ENCODE measurements at regions of chr2 and their contacts with region 1.

Region 1: GRCh38 chr2:64914735-64915509 is 74.3 kb upstream of the SLC1A4 start:
- ATAC-seq: peak in 3 of 8 experiments; percentile 23 to 32 (median 24)
- H3K4me3 ChIP-seq: no peak overlapping the region
- H3K27ac ChIP-seq: no peak overlapping the region
- H3K4me1 ChIP-seq: no peaks in the 10 kb centered on the region

Region 2: DNA sequence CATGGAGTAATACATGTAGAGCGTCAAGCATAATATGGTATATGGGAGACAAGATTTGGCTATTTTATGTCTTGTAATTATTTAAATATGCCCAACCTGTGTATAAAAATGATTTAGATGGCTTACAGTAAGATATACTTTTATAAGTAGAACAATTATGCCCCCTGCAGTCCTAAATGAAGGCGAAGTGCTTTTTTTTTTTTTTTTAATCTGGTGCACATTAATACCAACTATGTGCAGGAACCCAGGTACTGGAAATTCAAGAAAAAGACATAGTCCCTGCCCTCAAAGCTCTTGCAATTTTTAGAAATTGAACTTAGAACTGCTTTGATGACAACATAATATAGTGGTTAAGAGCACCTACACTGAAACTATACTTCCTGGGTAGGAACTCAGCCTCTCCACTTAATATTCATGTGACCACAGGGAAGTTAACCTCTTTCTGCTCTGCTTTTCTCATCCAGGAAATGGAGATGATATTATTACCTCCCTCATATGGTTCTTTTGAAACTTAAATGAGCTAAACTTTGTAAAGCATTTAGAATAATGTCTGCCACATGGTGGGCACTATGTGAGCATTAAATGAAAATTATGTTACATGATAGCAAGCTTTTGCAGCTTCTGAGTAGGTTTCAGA is 352.7 kb before region 1 on chr2:
- in situ Hi-C with region 1: no loop called
- ATAC-seq: peak in 2 of 8 experiments; percentile 39 to 59
- H3K4me3 ChIP-seq: no peak overlapping the region
- H3K27ac ChIP-seq: no peak overlapping the region
- H3K4me1 ChIP-seq: no peaks in the 10 kb centered on the region

Region 3: DNA sequence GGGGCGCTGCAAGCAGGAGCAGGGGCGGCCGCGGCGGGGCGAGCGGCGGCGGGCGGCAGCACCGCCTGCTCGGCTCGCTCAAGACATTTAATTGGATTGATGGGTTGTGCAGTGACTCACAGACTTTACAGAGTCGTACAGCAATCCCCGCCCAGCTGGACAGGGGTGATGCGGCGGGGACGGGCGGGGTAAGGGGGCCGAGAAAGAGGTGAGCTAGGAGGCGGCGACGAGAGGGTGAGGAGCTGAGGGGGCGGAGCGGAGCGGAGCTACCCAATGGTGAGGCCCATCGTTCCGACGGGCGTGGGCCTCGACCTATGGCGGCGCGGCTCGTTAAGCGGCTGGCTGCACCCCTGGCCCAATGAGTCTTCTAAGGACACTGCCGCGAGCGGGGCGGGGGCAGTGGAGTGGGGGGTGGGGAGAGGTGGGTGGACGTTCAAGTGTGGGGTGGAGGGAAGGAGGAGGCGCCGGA is 164.1 kb before region 1 on chr2:
- in situ Hi-C with region 1: no loop called
- ATAC-seq: peak; percentile 79 to 88 (median 86)
- H3K4me3 ChIP-seq: peak overlapping the region; percentile 52 to 95 (median 55)
- H3K27ac ChIP-seq: peak overlapping the region; percentile 86 to 87
- H3K4me1 ChIP-seq: peaks cover 3 to 8% of the 10 kb centered on the region in 2 donors

Region 4: DNA sequence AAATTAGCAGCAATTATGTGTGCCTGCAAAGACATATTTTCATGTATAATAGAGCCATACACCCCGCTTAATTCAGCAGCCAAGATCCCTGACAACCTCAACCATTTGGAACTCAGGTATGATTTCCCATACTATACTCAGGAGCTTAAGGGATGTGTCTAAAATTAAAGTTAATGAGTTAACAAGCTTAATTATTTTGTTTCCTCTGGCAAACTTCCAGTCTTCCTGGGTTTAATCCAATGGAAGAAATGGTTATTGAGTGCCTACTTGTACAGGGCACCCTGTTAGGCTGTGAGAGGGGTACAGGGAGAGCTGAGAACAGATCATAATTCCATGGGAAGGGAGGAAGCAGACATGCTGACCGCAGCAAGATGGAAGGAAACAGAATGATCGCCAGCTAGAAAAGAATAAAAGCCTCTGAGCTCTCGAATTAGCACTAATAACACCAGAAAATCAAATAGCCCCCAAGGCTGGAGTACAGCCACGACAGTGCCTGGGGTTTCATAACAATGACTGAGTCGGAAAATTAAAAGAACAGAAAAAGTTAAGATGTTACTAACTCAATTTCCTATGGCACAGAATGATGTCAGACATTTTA is 120.5 kb after region 1 on chr2:
- in situ Hi-C with region 1: loop called in 6 of 9 experiments (anchors 5 to 25 kb)
- ATAC-seq: no peak
- H3K4me3 ChIP-seq: no peak overlapping the region
- H3K27ac ChIP-seq: no peak overlapping the region
- H3K4me1 ChIP-seq: peaks cover 0 to 11% of the 10 kb centered on the region in 2 donors

Region 5: DNA sequence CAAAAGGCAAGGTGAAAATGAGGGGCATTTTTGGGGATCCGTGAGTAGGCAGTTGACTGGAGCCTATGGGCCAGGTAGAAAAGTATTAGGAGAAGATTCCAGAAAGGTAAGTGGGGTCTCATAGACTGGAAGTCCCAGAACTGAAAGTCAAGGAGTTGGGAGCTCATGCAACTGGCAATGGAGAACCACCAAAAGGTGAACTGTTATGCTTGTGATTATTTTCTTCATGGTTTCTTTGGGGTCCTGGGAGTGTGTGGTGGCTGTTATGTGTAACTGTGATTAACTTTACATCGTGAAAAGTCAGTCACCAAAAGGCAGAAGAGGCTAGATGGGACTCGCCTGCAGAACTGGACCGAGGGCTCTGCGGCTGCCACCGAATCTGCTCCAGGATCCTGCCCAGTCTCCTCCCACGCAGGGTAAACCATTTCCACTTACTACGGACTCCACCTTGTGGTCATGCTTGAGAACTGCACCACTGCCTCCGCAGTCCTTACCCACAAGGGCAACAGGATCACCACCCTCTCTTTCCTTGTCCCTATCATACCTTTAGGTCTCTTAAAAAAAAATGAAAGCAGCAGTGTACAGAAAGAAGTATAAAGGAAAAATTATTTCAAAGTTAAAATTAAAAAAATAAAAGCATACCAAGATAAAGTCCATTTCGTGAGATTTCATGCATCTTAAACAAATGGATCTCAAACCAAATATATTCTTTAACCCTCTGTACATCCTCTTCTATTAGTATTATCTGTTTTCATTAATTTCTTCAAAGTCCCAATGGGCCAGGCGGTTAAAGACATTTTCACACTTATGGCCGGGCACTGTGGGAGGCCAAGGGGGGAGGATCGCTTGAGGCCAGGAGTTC is 125.7 kb after region 1 on chr2:
- in situ Hi-C with region 1: loop called in 6 of 9 experiments (anchors 5 to 25 kb)
- ATAC-seq: peak; percentile 92 to 99 (median 96)
- H3K4me3 ChIP-seq: no peak overlapping the region
- H3K27ac ChIP-seq: no peak overlapping the region
- H3K4me1 ChIP-seq: no peaks in the 10 kb centered on the region

Region 6: GRCh38 chr2:65164426-65164891 is 249.5 kb after region 1 on chr2:
- in situ Hi-C with region 1: loop called in 1 of 9 experiments (anchors 25 kb)
- ATAC-seq: peak in 5 of 8 experiments; percentile 49 to 87 (median 71)
- H3K4me3 ChIP-seq: no peak overlapping the region
- H3K27ac ChIP-seq: peak overlapping the region; percentile 13 to 37
- H3K4me1 ChIP-seq: peaks cover 7 to 11% of the 10 kb centered on the region in 2 donors

Region 7: DNA sequence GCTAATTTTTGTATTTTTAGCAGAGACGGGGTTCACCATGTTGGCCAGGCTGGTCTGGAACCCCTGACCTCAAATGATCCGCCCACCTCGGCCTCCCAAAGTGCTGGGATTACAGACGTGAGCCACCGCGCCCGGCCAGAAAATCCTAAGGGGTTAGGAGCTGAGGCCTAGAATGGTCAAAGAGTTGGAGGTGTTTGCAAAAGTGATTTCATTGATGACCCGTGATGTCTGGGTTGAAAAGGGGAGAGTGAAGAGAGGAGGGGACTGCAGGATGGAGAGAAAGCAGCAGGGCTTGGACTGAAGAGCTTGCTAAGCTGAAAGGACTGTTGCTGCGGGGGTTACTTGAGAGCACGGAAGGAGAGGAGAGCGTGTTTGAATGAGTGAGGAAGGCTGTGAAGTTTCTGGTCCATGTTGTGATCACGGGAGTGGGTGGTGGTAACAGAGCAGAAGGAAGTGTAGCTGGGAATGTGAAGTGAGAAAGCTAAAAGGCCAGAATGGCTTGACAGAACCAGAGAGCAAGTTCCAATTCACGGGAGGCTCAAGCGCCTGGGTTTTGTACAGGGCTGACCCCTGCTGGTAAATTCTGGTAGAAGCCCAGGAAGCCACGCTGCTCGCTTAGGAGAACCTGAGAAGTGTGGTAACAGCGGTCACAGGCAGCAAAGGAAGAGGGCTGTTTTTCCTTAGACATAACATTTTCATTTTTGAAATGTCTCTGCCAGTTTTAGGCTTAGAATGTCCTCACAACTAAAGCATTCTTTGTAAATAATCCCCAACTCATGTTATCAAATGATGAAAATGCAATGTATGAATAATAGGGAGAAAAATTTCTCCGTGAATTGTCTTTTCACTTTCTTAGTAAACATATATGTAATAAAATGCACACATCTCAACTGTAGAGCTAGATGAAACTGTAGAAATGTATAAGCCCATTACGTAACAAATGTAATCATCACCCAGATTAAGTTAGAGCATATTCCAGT is 272.2 kb after region 1 on chr2:
- in situ Hi-C with region 1: loop called in 1 of 9 experiments (anchors 25 kb)
- ATAC-seq: peak; percentile 65 to 100 (median 91)
- H3K4me3 ChIP-seq: no peak overlapping the region
- H3K27ac ChIP-seq: no peak overlapping the region
- H3K4me1 ChIP-seq: no peaks in the 10 kb centered on the region

Region 8: DNA sequence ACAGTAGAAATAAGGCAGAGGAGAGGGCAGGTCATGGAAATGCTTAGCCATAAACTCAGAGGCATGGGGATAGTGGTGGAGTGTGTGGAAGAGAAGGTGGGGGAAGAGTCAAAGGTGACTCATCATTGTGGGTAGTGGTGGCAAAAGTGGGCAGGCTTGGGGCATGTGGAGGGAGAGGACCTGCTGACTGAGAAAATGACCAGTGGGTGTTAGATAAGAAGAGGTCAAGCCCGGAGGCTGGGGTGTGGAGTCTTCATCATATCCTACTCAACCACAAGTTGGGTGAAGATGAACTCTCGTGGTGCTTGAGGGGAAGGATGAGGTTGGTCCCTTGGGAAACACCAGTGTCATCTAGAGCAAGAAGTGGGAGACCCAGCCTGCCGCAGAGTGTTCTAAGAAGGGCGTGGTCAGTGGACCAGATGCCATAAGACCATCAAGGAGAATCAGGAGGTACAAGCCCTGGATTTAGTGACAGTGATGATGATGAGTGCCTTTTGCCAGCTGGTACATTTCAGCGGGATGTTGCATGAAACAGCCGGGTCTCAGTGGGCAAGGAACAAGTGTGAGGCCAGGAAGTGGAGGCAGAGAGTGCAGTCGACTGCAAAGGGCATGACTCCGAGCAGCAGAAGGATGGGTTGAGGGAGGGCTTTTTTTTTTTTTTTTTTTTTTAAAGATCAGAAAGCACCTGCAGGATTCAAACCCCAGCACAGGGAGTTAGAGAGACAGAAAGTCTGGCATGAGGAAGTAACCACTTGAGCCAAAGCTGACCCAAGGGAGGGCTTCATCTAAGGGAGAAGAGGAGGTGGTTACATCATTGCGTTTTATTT is 640.1 kb after region 1 on chr2:
- in situ Hi-C with region 1: loop called in 2 of 9 experiments (anchors 25 kb)
- ATAC-seq: peak in 1 of 8 experiments; percentile 26
- H3K4me3 ChIP-seq: no peak overlapping the region
- H3K27ac ChIP-seq: no peak overlapping the region
- H3K4me1 ChIP-seq: peaks cover 0 to 6% of the 10 kb centered on the region in 2 donors